Cardiac septum (tissue), 1 donor: ENCODE measurements at regions of chr6 and their contacts with region 1.

Region 1: DNA sequence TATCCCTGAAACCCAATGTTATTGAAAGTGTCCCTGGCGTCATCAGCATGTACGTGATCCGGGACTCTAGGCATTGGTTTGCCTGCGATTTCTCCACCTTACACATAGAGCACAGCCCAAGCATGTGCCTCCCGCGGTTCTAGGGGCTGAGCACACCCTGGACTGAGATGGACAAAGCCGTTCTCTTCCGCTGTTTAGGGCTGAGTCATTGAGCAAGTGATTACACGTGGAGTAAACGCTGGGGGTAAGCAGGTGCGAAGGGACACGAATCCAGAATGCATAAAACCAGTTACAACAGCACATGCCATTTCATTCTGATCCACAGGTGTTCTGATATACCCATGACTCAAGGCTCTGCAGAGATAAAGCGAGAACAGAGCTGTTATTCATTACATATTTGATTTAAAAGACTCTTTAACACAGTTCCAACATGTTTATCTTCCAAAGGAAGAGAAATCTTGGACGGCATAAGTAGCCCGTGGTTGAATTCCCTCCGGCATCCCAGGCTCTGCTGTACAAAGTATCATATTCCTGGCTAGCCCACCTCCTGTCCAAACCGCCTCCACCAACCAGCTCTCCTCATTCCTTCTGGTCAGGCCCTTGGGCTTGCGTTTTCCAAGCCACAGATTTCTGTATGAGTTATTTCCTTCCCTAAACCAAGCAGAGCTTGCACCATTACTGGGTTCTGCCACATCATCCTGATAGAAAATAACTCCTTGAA is 36.1 kb upstream of the THBS2 start:
- DNase-seq: no peak

Region 2: DNA sequence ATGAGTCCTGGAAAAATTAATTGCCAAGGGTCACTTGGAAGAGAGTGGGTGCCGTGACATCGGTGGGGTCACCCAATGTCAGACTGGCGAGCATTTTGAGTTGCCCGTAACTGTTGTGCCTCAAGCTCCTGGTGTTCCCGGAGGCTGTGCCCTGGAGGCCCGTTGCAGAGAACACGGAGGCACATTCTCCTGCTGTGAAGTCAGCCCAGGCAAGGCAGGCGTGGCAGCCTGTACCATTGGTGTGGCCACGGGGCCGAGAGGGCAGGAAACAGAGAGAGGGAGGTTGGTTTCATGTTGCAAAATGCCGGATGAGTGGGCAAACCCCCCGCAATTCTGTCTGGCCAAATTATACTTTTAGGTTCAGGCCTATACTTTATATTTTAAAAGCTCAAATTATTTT is 117.3 kb before region 1 on chr6:
- intact Hi-C with region 1: loop called (anchors 5 kb)
- DNase-seq: no peak